ENCODE measurements at regions of chr15 and their contacts with region 1.

Region 1: DNA sequence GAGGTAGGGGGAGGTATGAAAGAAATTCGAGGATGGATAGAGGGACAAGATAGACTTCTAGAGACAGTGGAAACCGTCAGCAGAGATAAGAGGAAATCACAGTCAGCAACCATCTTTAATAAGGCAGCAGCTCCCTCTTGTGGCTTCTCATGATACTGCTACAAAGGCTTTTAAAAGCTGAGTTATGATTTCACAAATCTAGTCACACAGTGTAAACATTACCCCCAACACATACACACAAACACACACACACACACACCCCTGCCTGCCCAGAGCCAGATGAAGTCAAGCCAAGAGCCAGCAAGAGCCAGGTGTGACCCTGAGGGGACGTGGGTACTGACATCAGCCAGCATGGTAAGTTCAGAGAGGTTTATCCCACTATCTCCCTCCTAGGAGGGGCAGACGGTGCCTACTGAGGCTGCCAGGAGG is 18.9 kb upstream of the TGM5 start:
- DNase-seq: peak; percentile 59 to 77 (median 68)
- H3K4me3 ChIP-seq: no peak overlapping the region
- H3K27ac ChIP-seq: no peak overlapping the region
- H3K4me1 ChIP-seq: peaks cover 10 to 21% (median 19%) of the 10 kb centered on the region in 4 experiments
- H3K27me3 ChIP-seq: peaks cover 0 to 9% (median 0%) of the 10 kb centered on the region in 5 experiments

Region 2: DNA sequence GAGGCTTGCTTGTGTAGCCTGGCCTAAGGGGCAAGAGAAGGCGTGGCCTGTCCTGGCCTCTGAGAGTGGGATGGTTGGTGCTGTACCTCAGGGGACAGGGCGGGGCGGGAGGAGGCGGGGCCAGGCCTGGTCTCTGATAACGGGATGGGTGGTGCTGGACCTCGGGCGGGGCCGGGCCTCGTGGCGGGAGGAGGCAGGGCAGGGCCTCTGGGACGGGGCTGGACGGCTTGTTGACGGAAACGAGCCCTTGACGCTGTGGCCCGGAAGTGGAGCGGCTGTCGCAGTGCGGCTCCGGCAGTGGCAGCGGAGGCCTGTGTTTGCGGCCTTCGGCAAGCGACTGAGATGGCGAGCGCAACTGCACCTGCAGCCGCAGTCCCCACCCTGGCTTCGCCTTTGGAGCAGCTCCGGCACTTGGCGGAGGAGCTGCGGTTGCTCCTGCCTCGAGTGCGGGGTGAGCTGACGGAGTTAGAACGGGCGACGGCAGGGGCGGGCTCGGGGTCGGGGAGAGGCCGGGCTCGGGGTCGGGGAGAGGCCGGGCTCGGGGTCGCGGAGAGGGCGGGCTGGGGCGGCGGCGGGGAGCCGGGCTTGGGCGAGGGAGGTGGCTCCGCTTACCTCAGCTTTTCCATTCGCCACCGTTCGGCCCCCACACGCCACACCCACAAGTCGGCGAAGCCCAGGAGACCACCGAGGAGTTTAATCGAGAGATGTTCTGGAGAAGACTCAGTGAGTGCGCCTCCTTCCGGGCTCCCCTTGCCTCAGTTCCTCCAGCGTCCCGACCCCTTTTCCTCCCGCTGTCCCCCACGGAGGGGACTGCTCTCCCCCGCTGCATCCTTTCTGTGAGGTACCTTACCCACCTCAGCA is 100.2 kb before region 1 on chr15 and contains the start of gene CCNDBP1:
- CTCF ChIA-PET with region 1: interaction called, 16 read pairs
- POLR2A ChIA-PET with region 1: interaction called, 3 read pairs
- DNase-seq: peak; percentile 88 to 94 (median 91)
- H3K4me3 ChIP-seq: peak within 1 kb of the TSS; percentile 67 to 87 (median 81)
- H3K27ac ChIP-seq: peak within 1 kb of the TSS; percentile 59 to 89
- H3K4me1 ChIP-seq: peaks cover 6 to 20% (median 15%) of the 10 kb centered on the region in 4 experiments
- H3K27me3 ChIP-seq: no peaks in the 10 kb centered on the region

Region 3: DNA sequence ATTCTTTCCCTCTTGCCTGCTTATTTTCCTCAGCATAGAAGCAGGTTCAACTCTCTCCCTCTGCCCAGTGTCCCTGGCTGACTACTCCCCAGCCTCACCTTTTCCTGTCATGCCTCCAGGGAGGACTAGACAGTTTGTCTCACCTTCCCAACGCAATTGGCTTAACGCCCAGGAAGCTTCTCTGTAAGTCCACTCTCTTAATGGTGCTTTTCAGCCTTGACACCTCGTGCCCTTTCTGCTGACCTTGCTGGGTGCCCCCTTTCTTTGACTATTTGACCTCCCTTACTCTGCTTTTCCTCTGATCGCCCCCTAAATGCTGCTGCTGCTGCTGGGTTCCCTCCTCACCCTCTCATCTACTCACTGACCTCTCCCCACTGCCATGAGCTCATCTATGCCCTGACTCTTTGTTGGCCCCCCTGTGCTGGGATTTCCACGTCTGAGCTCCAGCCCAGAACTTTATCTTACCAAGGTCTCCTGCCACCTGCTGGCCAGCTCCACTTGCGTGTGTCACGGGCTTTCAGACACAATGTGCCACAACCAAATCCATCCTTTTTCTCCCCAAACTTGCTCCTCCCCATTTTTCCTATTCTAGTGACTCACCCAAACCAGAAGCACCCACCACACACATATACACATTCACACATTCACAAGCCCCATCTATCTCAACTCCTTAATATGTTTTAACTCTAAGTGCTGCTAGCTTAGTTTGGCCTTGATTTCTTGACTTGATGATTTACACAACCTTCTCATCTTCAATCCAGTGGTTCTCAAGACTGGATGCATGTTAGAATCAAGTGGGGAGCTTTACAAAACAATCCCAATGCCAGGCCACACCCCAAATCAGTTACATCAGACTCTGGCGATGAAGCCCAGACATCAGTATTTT is 81.4 kb before region 1 on chr15:
- CTCF ChIA-PET with region 1: interaction called, 21 read pairs
- POLR2A ChIA-PET with region 1: no interaction called
- DNase-seq: peak; percentile 63 to 77 (median 77)
- H3K4me3 ChIP-seq: no peak overlapping the region
- H3K27ac ChIP-seq: no peak overlapping the region
- H3K4me1 ChIP-seq: no peaks in the 10 kb centered on the region
- H3K27me3 ChIP-seq: peaks cover 0 to 18% (median 10%) of the 10 kb centered on the region in 5 experiments

Region 4: DNA sequence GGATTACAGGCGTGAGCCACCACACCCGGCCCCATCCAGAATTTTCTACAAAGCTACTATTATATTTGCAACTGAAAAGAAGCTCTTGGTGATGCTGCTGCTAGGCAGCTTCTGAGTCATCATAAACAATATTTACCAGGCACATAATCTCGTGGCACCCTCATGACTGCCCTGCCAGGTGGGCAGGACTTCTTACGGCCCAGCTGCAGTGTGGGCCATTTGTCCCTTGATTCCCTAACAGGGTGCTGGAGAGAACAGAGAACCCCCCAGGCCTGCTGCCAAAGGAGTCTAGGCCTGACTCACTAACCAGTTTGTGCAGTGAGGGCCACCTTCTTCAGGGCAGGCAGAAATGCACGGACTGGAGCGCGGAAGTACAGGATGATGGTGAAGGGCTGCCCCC is 69.7 kb before region 1 on chr15:
- CTCF ChIA-PET with region 1: interaction called, 23 read pairs
- POLR2A ChIA-PET with region 1: no interaction called
- DNase-seq: peak in 1 of 3 donors; percentile 21
- H3K4me3 ChIP-seq: no peak overlapping the region
- H3K27ac ChIP-seq: no peak overlapping the region
- H3K4me1 ChIP-seq: peaks cover 0 to 5% (median 2%) of the 10 kb centered on the region in 4 experiments
- H3K27me3 ChIP-seq: no peaks in the 10 kb centered on the region

Region 5: GRCh38 chr15:43230640-43231115 is 54.9 kb before region 1 on chr15:
- CTCF ChIA-PET with region 1: interaction called, 127 read pairs
- POLR2A ChIA-PET with region 1: interaction called, 8 read pairs
- DNase-seq: peak in 2 of 3 donors; percentile 69 to 82
- H3K4me3 ChIP-seq: no peak overlapping the region
- H3K27ac ChIP-seq: no peak overlapping the region
- H3K4me1 ChIP-seq: peaks cover 0 to 16% (median 3%) of the 10 kb centered on the region in 4 experiments
- H3K27me3 ChIP-seq: peaks cover 0 to 9% (median 2%) of the 10 kb centered on the region in 5 experiments

Region 6: GRCh38 chr15:43268111-43269105 is 17.2 kb before region 1 on chr15:
- CTCF ChIA-PET with region 1: interaction called, 70 read pairs
- POLR2A ChIA-PET with region 1: no interaction called
- DNase-seq: peak; percentile 49 to 62 (median 60)
- H3K4me3 ChIP-seq: no peak overlapping the region
- H3K27ac ChIP-seq: no peak overlapping the region
- H3K4me1 ChIP-seq: peaks cover 8 to 36% (median 21%) of the 10 kb centered on the region in 4 experiments
- H3K27me3 ChIP-seq: peaks cover 0 to 2% (median 0%) of the 10 kb centered on the region in 5 experiments

Region 7: GRCh38 chr15:43274136-43274535 is 11.5 kb before region 1 on chr15:
- CTCF ChIA-PET with region 1: interaction called, 70 read pairs
- POLR2A ChIA-PET with region 1: no interaction called
- DNase-seq: no peak
- H3K4me3 ChIP-seq: no peak overlapping the region
- H3K27ac ChIP-seq: no peak overlapping the region
- H3K4me1 ChIP-seq: peaks cover 8 to 37% (median 20%) of the 10 kb centered on the region in 4 experiments
- H3K27me3 ChIP-seq: no peaks in the 10 kb centered on the region

Measured in common myeloid progenitor, CD34-positive (primary cell).